ENCODE measurements at regions of chr6 and their contacts with region 1.

Region 1: GRCh38 chr6:42260972-42261371 is 43.3 kb upstream of the MRPS10 start:
- DNase-seq: peak; percentile 79
- ATAC-seq: peak; percentile 71
- H3K4me3 Mint-ChIP-seq: no peak overlapping the region
- H3K27ac Mint-ChIP-seq: no peak overlapping the region
- H3K4me1 Mint-ChIP-seq: peaks cover 43% of the 10 kb centered on the region
- H3K27me3 Mint-ChIP-seq: no peaks in the 10 kb centered on the region
- CTCF ChIP-seq: peak; percentile 46

Region 2: GRCh38 chr6:42086046-42087035 is 174.6 kb before region 1 on chr6:
- CTCF ChIA-PET with region 1: no interaction called
- POLR2A ChIA-PET with region 1: no interaction called
- DNase-seq: peak; percentile 38
- ATAC-seq: peak; percentile 63
- H3K4me3 Mint-ChIP-seq: no peak overlapping the region
- H3K27ac Mint-ChIP-seq: no peak overlapping the region
- H3K4me1 Mint-ChIP-seq: peaks cover 14% of the 10 kb centered on the region
- H3K27me3 Mint-ChIP-seq: peaks cover 42% of the 10 kb centered on the region
- CTCF ChIP-seq: 0 out of 2 replicates have a peak, but pooled peaks have one; percentile 17

Region 3: GRCh38 chr6:42118162-42119001 is 142.6 kb before region 1 on chr6:
- CTCF ChIA-PET with region 1: no interaction called
- POLR2A ChIA-PET with region 1: no interaction called
- DNase-seq: no peak
- ATAC-seq: no peak
- H3K4me3 Mint-ChIP-seq: no peak overlapping the region
- H3K27ac Mint-ChIP-seq: 0 out of 2 replicates have a peak overlapping the region, but pooled peaks have one; percentile 70
- H3K4me1 Mint-ChIP-seq: no peaks in the 10 kb centered on the region
- H3K27me3 Mint-ChIP-seq: no peaks in the 10 kb centered on the region
- CTCF ChIP-seq: no peak

Region 4: GRCh38 chr6:42224222-42224989 is 36.6 kb before region 1 on chr6:
- CTCF ChIA-PET with region 1: no interaction called
- POLR2A ChIA-PET with region 1: no interaction called
- DNase-seq: no peak
- ATAC-seq: no peak
- H3K4me3 Mint-ChIP-seq: no peak overlapping the region
- H3K27ac Mint-ChIP-seq: peak overlapping the region; percentile 74; the same call in 1 of the 2 replicates
- H3K4me1 Mint-ChIP-seq: no peaks in the 10 kb centered on the region
- H3K27me3 Mint-ChIP-seq: no peaks in the 10 kb centered on the region
- CTCF ChIP-seq: no peak

Region 5: GRCh38 chr6:42279144-42279781 is 18.3 kb after region 1 on chr6:
- CTCF ChIA-PET with region 1: interaction called, 19 read pairs
- POLR2A ChIA-PET with region 1: no interaction called
- DNase-seq: no peak
- ATAC-seq: no peak
- H3K4me3 Mint-ChIP-seq: no peak overlapping the region
- H3K27ac Mint-ChIP-seq: no peak overlapping the region
- H3K4me1 Mint-ChIP-seq: peaks cover 41% of the 10 kb centered on the region
- H3K27me3 Mint-ChIP-seq: no peaks in the 10 kb centered on the region
- CTCF ChIP-seq: no peak

Region 6: GRCh38 chr6:42322676-42323075 is 61.7 kb after region 1 on chr6:
- CTCF ChIA-PET with region 1: interaction called, 11 read pairs
- POLR2A ChIA-PET with region 1: interaction called, 3 read pairs
- DNase-seq: peak; percentile 70
- ATAC-seq: peak; percentile 93
- H3K4me3 Mint-ChIP-seq: no peak overlapping the region
- H3K27ac Mint-ChIP-seq: no peak overlapping the region
- H3K4me1 Mint-ChIP-seq: peaks cover 15% of the 10 kb centered on the region
- H3K27me3 Mint-ChIP-seq: no peaks in the 10 kb centered on the region
- CTCF ChIP-seq: peak; percentile 44

Region 7: DNA sequence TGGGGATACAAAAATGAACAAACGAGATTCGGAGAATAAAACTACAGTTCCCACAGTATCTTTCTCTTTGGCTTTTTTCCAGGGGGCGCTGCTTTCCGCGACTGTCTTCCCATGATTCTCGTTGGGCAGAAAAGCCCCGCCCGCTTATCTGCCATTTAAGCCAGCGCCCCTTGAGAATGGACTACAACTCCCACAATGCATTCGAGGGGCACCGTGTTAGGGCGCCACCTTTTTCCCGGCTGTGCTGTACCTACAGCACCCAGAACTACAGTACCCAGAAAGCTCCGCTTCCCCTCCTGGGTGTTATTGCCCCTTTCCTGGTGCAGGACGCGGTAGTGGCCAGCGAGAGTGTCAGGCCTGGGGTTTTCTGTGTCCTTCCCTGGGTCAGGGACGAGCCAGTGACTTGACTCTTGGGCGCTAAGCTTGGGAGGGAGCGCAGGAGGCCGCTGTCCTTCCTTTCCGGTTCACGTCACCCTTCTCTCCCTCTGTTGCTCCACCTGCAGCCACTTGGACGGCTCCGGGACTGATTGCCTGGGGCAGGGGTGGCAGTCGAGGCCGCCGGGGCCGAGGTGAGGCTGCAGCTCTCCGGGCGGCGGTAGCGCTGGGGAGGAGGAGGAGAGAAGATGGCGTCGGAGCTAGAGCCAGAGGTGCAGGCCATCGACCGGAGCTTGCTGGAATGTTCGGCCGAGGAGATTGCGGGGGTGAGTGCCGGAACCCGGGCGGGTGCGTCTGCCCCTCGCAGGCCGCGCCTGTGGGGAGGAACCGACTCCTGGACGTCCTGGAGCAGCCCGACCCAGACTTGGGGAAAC is 302.9 kb after region 1 on chr6 and contains the start of gene UBR2:
- CTCF ChIA-PET with region 1: interaction called, 10 read pairs
- POLR2A ChIA-PET with region 1: no interaction called
- DNase-seq: peak; percentile 96
- ATAC-seq: peak; percentile 98
- H3K4me3 Mint-ChIP-seq: peak within 1 kb of the TSS; percentile 90
- H3K27ac Mint-ChIP-seq: peak within 1 kb of the TSS; percentile 93
- H3K4me1 Mint-ChIP-seq: peaks cover 8% of the 10 kb centered on the region
- H3K27me3 Mint-ChIP-seq: peaks cover 4% of the 10 kb centered on the region; the same call in 1 of the 2 replicates
- CTCF ChIP-seq: 0 out of 2 replicates have a peak, but pooled peaks have one; percentile 26
- total RNA-seq, gene UBR2: 16.4 to 18.8 TPM (median 17.1 TPM) in 3 replicates